ENCODE measurements at regions of chr12 and their contacts with region 1.

Region 1: DNA sequence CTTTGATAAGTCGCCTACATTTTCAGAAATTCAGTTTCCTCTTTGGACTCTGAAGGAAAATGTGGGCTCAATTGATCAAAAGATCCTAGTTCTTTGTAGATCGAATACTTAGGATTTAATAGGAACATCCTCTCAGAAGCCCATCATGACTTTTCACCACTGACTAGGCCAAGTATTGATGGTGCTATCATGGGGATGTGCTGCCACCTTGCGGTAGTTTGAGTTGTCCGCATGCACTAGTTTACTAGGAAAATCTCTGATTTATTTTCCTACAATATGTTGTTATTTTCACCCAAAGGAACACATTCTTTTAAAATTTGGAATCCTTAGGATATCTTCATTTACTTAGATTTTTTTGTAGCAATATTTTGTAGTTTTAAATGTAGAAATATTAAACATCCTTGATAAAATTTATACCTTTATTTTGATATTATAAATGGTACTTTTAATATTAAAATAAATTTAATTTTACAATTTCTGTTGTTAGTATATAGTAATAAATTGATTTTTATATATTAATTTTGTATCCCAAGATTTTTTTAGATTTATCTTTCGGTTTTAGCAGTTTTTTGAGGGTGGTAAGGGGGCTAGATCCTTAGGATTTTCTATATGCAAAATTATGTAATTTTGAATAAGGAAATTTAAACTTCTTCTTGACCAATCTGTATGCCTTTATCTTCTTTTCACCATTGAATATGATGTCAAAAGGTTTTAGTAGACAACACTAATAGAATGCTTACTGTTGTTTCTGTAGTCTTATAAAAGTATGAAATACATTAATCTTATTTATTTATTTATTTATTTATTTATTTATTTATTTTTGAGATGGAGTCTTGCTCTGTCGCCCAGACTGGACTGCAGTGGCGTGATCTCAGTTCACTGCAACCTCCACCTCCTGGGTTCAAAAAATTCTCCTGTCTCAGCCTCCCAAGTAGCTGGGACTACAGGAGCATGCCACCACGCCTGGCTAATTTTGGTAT is 52.9 kb upstream of the OR9K2 start:
- DNase-seq: peak; percentile 88
- ATAC-seq: peak; percentile 71
- H3K4me3 Mint-ChIP-seq: no peak overlapping the region
- H3K27ac Mint-ChIP-seq: no peak overlapping the region
- H3K4me1 Mint-ChIP-seq: peaks cover 4% of the 10 kb centered on the region
- H3K27me3 Mint-ChIP-seq: peaks cover 20% of the 10 kb centered on the region
- CTCF ChIP-seq: peak; percentile 85

Region 2: GRCh38 chr12:54723379-54724256 is 349.7 kb before region 1 on chr12:
- CTCF ChIA-PET with region 1: interaction called, 33 read pairs
- POLR2A ChIA-PET with region 1: no interaction called
- intact Hi-C with region 1: no loop called
- DNase-seq: peak; percentile 44
- ATAC-seq: peak; percentile 75
- H3K4me3 Mint-ChIP-seq: no peak overlapping the region
- H3K27ac Mint-ChIP-seq: no peak overlapping the region
- H3K4me1 Mint-ChIP-seq: peaks cover 5% of the 10 kb centered on the region
- H3K27me3 Mint-ChIP-seq: peaks cover 1% of the 10 kb centered on the region
- CTCF ChIP-seq: peak; percentile 56

Region 3: GRCh38 chr12:54853995-54854566 is 219.3 kb before region 1 on chr12 and contains the start of gene MUCL1:
- CTCF ChIA-PET with region 1: interaction called, 27 read pairs
- POLR2A ChIA-PET with region 1: no interaction called
- intact Hi-C with region 1: loop called (anchors 2 kb)
- DNase-seq: peak; percentile 87
- ATAC-seq: peak; percentile 100
- H3K4me3 Mint-ChIP-seq: no peak within 1 kb of the TSS
- H3K27ac Mint-ChIP-seq: no peak within 1 kb of the TSS
- H3K4me1 Mint-ChIP-seq: peaks cover 22% of the 10 kb centered on the region
- H3K27me3 Mint-ChIP-seq: no peaks in the 10 kb centered on the region
- CTCF ChIP-seq: peak; percentile 94
- total RNA-seq, gene MUCL1: not detected

Region 4: DNA sequence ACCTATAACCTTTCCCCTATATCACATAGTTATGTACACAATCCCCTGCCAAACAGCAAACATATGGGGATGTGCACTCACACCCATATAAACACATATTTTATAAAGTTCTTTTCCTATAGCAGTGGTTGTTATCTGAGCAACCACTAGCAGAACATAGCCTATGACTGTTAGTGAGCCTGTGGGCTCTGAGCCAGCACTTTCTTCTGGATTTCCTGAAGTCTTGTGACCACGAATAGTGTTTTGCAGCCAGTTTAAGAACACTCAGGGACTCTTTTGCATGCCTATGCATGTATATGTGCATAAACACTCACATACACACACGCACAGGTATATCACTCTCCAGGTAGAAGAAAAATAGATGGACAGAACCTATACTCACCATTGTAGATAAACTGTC is 105.9 kb before region 1 on chr12:
- CTCF ChIA-PET with region 1: interaction called, 21 read pairs
- POLR2A ChIA-PET with region 1: no interaction called
- intact Hi-C with region 1: no loop called
- DNase-seq: no peak
- ATAC-seq: no peak
- H3K4me3 Mint-ChIP-seq: no peak overlapping the region
- H3K27ac Mint-ChIP-seq: peak overlapping the region; percentile 81
- H3K4me1 Mint-ChIP-seq: peaks cover 76% of the 10 kb centered on the region
- H3K27me3 Mint-ChIP-seq: no peaks in the 10 kb centered on the region
- CTCF ChIP-seq: no peak

Region 5: GRCh38 chr12:55008944-55009585 is 64.3 kb before region 1 on chr12:
- CTCF ChIA-PET with region 1: interaction called, 707 read pairs
- POLR2A ChIA-PET with region 1: no interaction called
- intact Hi-C with region 1: no loop called
- DNase-seq: no peak
- ATAC-seq: no peak
- H3K4me3 Mint-ChIP-seq: no peak overlapping the region
- H3K27ac Mint-ChIP-seq: no peak overlapping the region
- H3K4me1 Mint-ChIP-seq: peaks cover 2% of the 10 kb centered on the region
- H3K27me3 Mint-ChIP-seq: no peaks in the 10 kb centered on the region
- CTCF ChIP-seq: no peak

Region 6: DNA sequence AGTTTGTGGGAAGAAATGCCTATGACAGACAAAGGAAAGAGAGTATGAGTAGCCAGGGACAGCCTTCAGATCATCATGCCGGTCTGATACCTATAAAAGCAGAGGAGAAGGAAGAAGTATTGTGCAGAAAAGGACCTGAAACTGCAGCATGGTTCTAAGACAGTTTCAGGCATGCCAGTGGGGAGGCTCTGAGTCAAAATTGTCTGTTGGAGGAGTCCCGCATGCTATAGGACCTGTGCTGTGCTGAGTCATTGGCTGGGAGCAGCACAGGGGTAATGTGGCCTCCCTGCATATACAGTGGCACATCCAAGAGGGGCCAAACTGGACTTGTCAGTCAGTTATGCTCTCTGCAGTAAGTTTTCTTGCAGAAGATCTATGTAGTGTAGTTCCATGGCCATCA is 12.9 kb before region 1 on chr12:
- CTCF ChIA-PET with region 1: interaction called, 16 read pairs
- POLR2A ChIA-PET with region 1: interaction called, 5 read pairs
- intact Hi-C with region 1: no loop called
- DNase-seq: peak; percentile 67
- ATAC-seq: peak; percentile 100
- H3K4me3 Mint-ChIP-seq: no peak overlapping the region
- H3K27ac Mint-ChIP-seq: no peak overlapping the region
- H3K4me1 Mint-ChIP-seq: peaks cover 10% of the 10 kb centered on the region
- H3K27me3 Mint-ChIP-seq: peaks cover 3% of the 10 kb centered on the region
- CTCF ChIP-seq: no peak

Region 7: DNA sequence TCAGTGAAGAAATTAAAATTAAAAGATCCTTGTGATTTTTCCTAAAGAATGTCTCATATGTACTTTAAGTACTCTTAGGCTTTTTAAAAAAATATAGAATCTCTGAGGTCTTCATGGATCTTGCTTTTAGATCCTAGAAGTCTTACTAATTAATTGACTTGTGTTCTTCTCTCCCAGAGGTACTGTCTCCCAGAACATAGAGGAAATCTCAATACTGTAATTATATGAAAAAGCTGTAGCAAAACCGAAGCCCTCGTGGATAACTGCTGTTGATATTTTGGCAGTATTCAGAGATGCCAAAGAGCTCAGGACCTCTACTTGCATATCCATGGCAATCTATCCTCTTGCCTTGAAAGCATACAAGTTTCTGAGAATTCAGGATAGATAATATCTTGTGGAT is 52.8 kb after region 1 on chr12 and contains the start of gene OR9K2:
- CTCF ChIA-PET with region 1: no interaction called
- POLR2A ChIA-PET with region 1: no interaction called
- intact Hi-C with region 1: no loop called
- DNase-seq: no peak
- ATAC-seq: no peak
- H3K4me3 Mint-ChIP-seq: no peak within 1 kb of the TSS
- H3K27ac Mint-ChIP-seq: no peak within 1 kb of the TSS
- H3K4me1 Mint-ChIP-seq: no peaks in the 10 kb centered on the region
- H3K27me3 Mint-ChIP-seq: peaks cover 28% of the 10 kb centered on the region
- CTCF ChIP-seq: no peak
- total RNA-seq, gene OR9K2: not detected